IMR-90 (cell line): ENCODE measurements at regions of chr1 and their contacts with region 1.

Region 1: GRCh38 chr1:160193091-160193819 is 2.9 kb downstream of the CASQ1 start:
- DNase-seq: peak; percentile 87
- ATAC-seq: peak; percentile 97
- H3K4me3 ChIP-seq: no peak overlapping the region
- H3K27ac ChIP-seq: no peak overlapping the region
- H3K4me1 ChIP-seq: peaks cover 4% of the 10 kb centered on the region
- H3K27me3 ChIP-seq: peaks cover 3% of the 10 kb centered on the region; the same call in 1 of the 2 replicates
- CTCF ChIP-seq: peak; percentile 98
- POLR2A ChIP-seq: no peak
- RAD21 ChIP-seq: peak; percentile 97

Region 2: DNA sequence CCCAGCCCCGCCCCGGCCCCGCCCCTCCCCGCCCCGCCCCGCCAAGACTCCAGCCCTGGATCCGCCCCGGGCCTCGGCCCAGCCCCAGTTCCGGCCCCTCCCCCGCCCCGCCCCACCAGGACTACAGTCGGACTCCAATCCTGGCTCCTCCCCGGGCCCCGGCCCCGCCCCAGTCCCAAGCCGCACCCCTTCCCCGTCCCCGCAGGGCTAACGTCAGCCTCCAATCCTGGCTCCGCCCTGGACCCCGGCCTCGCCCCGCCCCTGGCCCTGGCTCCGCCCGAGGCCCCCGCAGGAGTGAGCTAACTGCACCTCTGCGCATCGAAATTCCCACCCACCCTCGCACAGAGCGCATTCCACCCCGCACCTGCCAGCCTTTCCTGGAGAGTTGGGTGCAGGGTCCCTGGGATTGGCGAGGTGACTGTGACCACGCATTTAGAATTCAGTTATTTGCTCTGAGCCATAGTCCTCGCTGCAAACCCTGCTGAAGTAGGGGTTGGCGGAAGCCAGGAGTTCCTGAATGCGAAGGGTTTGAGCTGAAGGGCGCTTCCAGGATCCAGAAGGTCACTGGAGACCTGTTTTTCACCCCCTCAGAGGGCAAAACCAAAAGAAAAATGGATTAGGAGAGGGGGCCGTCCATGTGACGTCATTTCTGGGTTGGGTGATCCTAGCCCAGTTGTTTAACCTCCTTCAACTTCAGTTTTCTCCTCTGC is 94.2 kb before region 1 on chr1:
- CTCF ChIA-PET with region 1: interaction called, 17 read pairs
- POLR2A ChIA-PET with region 1: no interaction called
- dilution Hi-C with region 1: no loop called
- in situ Hi-C with region 1: no loop called
- intact Hi-C with region 1: loop called (anchors 1 kb)
- DNase-seq: peak; percentile 87
- ATAC-seq: peak; percentile 95
- H3K4me3 ChIP-seq: peak overlapping the region; percentile 64
- H3K27ac ChIP-seq: 0 out of 2 replicates have a peak overlapping the region, but pooled peaks have one; percentile 7
- H3K4me1 ChIP-seq: peaks cover 16% of the 10 kb centered on the region
- H3K27me3 ChIP-seq: no peaks in the 10 kb centered on the region; the same call in 1 of the 2 replicates
- CTCF ChIP-seq: no peak
- POLR2A ChIP-seq: no peak
- RAD21 ChIP-seq: no peak

Region 3: DNA sequence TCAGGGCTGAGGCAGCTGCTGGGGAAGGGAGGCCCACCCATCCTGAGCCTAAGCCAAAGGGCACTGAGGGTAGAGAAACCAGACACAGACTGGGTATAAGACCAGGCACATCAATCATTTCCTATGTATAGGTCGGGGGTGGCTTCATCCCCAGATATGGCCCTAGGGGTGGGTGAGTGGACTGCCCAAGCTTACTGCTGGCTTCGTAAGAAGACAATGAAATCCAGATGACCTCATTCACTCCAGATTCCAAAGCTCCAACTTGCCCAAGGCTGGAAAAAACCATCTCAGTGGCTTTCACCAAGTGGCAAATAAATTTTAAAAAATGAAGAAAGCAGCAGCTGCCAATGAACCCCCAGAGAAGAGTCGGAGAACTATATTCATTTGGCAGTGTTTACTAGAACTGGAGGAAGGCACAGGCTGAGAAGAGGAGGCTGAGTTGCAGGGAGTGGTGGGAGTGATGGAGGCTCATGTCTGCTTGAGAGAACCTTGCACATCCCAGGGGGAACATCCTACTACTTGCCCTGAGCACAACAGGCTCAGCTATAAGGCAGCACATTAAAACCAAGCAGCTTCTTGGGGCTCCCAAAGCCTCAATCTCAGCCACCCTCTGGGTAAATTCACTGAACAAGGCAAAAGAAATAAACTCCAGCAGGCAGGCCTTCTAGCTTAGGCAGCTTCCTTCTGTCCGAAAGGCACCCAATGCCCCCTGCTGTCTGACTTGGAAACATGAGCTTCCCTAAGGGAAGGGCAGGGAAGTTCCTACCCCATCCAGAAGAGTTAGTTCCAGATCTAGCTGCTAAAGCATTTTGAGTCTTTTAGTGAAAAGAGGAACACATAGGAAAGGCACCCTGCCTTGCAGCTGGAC is 26.0 kb after region 1 on chr1:
- CTCF ChIA-PET with region 1: interaction called, 63 read pairs
- POLR2A ChIA-PET with region 1: interaction called, 3 read pairs
- dilution Hi-C with region 1: no loop called
- in situ Hi-C with region 1: no loop called
- intact Hi-C with region 1: loop called (anchors 1 kb)
- DNase-seq: peak; percentile 80
- ATAC-seq: peak; percentile 79
- H3K4me3 ChIP-seq: no peak overlapping the region
- H3K27ac ChIP-seq: peak overlapping the region; percentile 53; the same call in 1 of the 2 replicates
- H3K4me1 ChIP-seq: peaks cover 21% of the 10 kb centered on the region
- H3K27me3 ChIP-seq: no peaks in the 10 kb centered on the region
- CTCF ChIP-seq: peak; percentile 79
- POLR2A ChIP-seq: no peak
- RAD21 ChIP-seq: peak; percentile 79

Region 4: GRCh38 chr1:160251687-160252526 is 58.7 kb after region 1 on chr1:
- CTCF ChIA-PET with region 1: interaction called, 20 read pairs
- POLR2A ChIA-PET with region 1: no interaction called
- dilution Hi-C with region 1: no loop called
- in situ Hi-C with region 1: no loop called
- intact Hi-C with region 1: loop called (anchors 5 kb)
- DNase-seq: peak; percentile 77
- ATAC-seq: peak; percentile 85
- H3K4me3 ChIP-seq: no peak overlapping the region
- H3K27ac ChIP-seq: no peak overlapping the region
- H3K4me1 ChIP-seq: no peaks in the 10 kb centered on the region
- H3K27me3 ChIP-seq: no peaks in the 10 kb centered on the region
- CTCF ChIP-seq: peak; percentile 72
- POLR2A ChIP-seq: no peak
- RAD21 ChIP-seq: peak; percentile 83

Region 5: GRCh38 chr1:160291248-160292220 is 98.3 kb after region 1 on chr1:
- CTCF ChIA-PET with region 1: interaction called, 15 read pairs
- POLR2A ChIA-PET with region 1: no interaction called
- dilution Hi-C with region 1: no loop called
- in situ Hi-C with region 1: no loop called
- intact Hi-C with region 1: loop called (anchors 1 kb)
- DNase-seq: peak; percentile 70
- ATAC-seq: peak; percentile 71
- H3K4me3 ChIP-seq: no peak overlapping the region
- H3K27ac ChIP-seq: no peak overlapping the region
- H3K4me1 ChIP-seq: no peaks in the 10 kb centered on the region
- H3K27me3 ChIP-seq: no peaks in the 10 kb centered on the region
- CTCF ChIP-seq: peak; percentile 66
- POLR2A ChIP-seq: no peak
- RAD21 ChIP-seq: peak; percentile 52

Region 6: DNA sequence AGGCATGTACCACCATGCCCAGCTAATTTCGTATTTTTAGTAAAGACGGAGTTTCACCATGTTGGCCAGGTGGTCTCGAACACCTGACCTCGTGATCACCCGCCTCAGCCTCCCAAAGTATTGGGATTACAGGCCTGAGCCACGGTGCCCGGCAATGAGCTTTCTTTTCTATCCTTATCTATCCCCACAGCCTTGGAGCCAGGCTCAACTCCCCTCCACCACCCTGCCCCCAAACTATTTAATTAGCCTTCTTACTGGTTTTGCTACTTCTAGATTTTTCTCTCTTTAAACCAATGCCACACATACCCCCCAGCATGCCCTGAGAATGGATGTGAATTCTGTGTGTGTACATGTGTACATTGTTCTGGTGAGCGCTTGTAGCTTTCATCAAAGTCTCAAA is 201.4 kb after region 1 on chr1:
- CTCF ChIA-PET with region 1: no interaction called
- POLR2A ChIA-PET with region 1: no interaction called
- dilution Hi-C with region 1: no loop called
- in situ Hi-C with region 1: no loop called
- intact Hi-C with region 1: no loop called
- DNase-seq: no peak
- ATAC-seq: no peak
- H3K4me3 ChIP-seq: no peak overlapping the region
- H3K27ac ChIP-seq: no peak overlapping the region
- H3K4me1 ChIP-seq: no peaks in the 10 kb centered on the region
- H3K27me3 ChIP-seq: peaks cover 19% of the 10 kb centered on the region
- CTCF ChIP-seq: no peak
- POLR2A ChIP-seq: no peak
- RAD21 ChIP-seq: no peak

Region 7: DNA sequence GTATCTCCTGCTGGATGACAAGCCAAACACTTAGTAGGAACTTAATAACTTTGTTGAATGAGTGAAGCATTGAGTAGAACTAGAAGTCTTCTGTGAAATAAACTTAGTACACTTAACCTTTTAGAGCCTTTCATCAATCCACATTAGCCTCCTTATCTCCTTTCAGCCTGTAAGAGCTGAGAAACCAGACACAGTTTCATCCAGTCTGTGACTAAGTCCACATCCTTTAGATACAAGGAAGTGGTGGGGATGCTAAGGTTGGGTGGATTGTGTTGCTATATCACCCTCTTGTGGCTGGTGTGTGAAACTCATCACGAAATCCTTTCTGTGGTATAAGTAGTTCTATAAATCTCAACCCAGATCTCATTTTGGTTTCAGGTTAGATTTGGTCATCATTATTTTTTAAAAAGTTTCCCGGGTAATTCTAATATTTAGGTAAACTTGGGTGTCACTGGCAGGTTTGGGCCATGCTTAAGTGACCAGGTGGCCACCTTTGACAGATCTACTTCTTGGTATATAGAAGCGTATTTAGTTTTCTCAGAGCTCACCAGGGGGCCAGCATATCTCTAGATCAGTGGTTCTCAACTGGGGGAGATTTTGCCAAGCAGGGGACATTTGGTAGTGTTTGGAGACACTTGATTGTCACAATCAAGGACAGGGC is 413.9 kb after region 1 on chr1:
- CTCF ChIA-PET with region 1: no interaction called
- POLR2A ChIA-PET with region 1: no interaction called
- dilution Hi-C with region 1: no loop called
- in situ Hi-C with region 1: loop called (anchors 25 kb)
- intact Hi-C with region 1: no loop called
- DNase-seq: peak; percentile 77
- ATAC-seq: peak; percentile 96
- H3K4me3 ChIP-seq: no peak overlapping the region
- H3K27ac ChIP-seq: no peak overlapping the region
- H3K4me1 ChIP-seq: no peaks in the 10 kb centered on the region
- H3K27me3 ChIP-seq: no peaks in the 10 kb centered on the region; the same call in 1 of the 2 replicates
- CTCF ChIP-seq: peak; percentile 72
- POLR2A ChIP-seq: no peak
- RAD21 ChIP-seq: peak; percentile 80